ENCODE measurements at regions of chr3 and their contacts with region 1.

Region 1: GRCh38 chr3:150546226-150547044 is at the starts of genes EIF2A and SERP1:
- DNase-seq: peak; percentile 99
- H3K4me3 Mint-ChIP-seq: peak within 1 kb of the TSS; percentile 95
- H3K27ac Mint-ChIP-seq: peak within 1 kb of the TSS; percentile 98
- H3K4me1 Mint-ChIP-seq: peaks cover 70% of the 10 kb centered on the region
- H3K27me3 Mint-ChIP-seq: no peaks in the 10 kb centered on the region
- total RNA-seq, gene EIF2A: 122 TPM in 2 replicates
- total RNA-seq, gene SERP1: 96.0 and 102 TPM in 2 replicates

Region 2: DNA sequence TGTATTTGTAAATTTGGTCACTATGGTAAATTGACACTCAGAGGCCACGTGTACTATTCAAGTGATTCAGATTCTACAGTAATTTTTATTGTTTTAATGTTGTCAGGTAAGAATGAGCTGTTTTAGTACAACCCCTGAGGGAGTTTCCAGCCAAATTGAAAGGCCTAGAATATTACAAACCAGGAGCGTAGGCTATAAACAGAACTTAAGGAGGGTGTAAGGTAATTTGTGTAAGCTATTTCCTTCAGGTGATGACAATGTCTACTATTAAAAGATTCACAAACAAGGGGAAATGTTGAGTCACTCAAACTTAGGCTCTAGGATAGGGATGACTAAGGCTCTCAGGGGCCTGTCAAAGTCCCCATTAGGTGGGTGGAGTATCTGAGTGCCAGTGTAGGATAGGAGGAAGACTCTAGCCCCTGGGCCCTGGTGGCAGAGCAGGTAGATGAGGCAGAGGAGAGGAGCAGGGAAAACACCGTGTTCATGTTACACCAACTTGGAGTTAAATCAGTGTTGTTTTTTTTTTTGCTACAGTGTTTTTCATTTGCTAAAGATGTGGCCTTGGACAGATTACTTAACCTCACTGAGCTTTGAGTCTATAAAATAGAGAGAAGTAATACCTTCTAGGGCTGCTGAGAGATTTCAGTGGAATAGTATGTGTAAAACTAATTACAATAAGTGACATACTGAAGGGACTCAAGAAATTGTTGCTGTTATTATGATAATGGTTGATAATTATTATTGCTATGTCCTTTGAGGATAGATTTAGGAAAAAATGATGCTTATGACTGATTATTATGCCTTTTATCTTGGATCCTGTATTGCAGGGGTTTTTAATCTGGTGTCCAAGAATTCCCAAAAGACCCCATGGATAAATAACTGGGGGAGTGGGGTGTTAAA is 1179.2 kb before region 1 on chr3:
- intact Hi-C with region 1: no loop called
- DNase-seq: no peak
- H3K4me3 Mint-ChIP-seq: no peak overlapping the region
- H3K27ac Mint-ChIP-seq: peak overlapping the region; percentile 59
- H3K4me1 Mint-ChIP-seq: peaks cover 9% of the 10 kb centered on the region
- H3K27me3 Mint-ChIP-seq: peaks cover 8% of the 10 kb centered on the region

Region 3: DNA sequence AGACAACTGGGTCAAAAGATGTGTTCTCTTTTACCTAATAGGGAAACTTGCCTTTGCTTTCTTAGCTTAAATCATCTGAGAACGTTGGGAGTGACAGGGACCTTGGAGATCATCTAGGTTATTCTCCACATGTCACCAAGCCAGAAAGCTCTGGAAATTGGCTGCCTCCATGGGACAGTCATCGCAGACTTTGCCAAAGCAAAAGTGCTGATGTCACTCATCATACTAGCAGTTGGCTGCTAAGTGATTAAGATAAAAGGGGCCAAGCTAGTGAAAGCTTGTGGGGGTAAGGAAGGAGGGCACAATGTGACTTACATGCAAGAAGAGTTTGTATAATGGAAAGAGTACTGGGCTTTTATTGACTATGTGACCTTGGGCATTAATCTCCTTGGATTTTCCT is 377.7 kb before region 1 on chr3:
- intact Hi-C with region 1: no loop called
- DNase-seq: no peak
- H3K4me3 Mint-ChIP-seq: no peak overlapping the region
- H3K27ac Mint-ChIP-seq: no peak overlapping the region
- H3K4me1 Mint-ChIP-seq: no peaks in the 10 kb centered on the region
- H3K27me3 Mint-ChIP-seq: peaks cover 2% of the 10 kb centered on the region

Region 4: GRCh38 chr3:150408221-150409102 is 138.0 kb before region 1 on chr3 and contains the start of gene TSC22D2:
- intact Hi-C with region 1: loop called (anchors 1 kb)
- DNase-seq: peak; percentile 92
- H3K4me3 Mint-ChIP-seq: peak within 1 kb of the TSS; percentile 83
- H3K27ac Mint-ChIP-seq: peak within 1 kb of the TSS; percentile 95
- H3K4me1 Mint-ChIP-seq: peaks cover 40% of the 10 kb centered on the region
- H3K27me3 Mint-ChIP-seq: peaks cover 6% of the 10 kb centered on the region
- total RNA-seq, gene TSC22D2: 21.3 and 22.7 TPM in 2 replicates

Region 5: GRCh38 chr3:150603153-150603979 is 56.9 kb after region 1 on chr3 and contains the start of gene SELENOT:
- intact Hi-C with region 1: loop called (anchors 1 kb)
- DNase-seq: peak; percentile 96
- H3K4me3 Mint-ChIP-seq: peak within 1 kb of the TSS; percentile 99
- H3K27ac Mint-ChIP-seq: peak within 1 kb of the TSS; percentile 99
- H3K4me1 Mint-ChIP-seq: peaks cover 80% of the 10 kb centered on the region
- H3K27me3 Mint-ChIP-seq: peaks cover 2% of the 10 kb centered on the region
- total RNA-seq, gene SELENOT: 139 and 140 TPM in 2 replicates

Region 6: GRCh38 chr3:150763122-150763841 is 216.8 kb after region 1 on chr3 and contains the start of gene SIAH2:
- intact Hi-C with region 1: loop called (anchors 1 kb)
- DNase-seq: peak; percentile 90
- H3K4me3 Mint-ChIP-seq: peak within 1 kb of the TSS; percentile 99
- H3K27ac Mint-ChIP-seq: peak within 1 kb of the TSS; percentile 100
- H3K4me1 Mint-ChIP-seq: peaks cover 64% of the 10 kb centered on the region
- H3K27me3 Mint-ChIP-seq: no peaks in the 10 kb centered on the region
- total RNA-seq, gene SIAH2: 175 and 177 TPM in 2 replicates

Region 7: DNA sequence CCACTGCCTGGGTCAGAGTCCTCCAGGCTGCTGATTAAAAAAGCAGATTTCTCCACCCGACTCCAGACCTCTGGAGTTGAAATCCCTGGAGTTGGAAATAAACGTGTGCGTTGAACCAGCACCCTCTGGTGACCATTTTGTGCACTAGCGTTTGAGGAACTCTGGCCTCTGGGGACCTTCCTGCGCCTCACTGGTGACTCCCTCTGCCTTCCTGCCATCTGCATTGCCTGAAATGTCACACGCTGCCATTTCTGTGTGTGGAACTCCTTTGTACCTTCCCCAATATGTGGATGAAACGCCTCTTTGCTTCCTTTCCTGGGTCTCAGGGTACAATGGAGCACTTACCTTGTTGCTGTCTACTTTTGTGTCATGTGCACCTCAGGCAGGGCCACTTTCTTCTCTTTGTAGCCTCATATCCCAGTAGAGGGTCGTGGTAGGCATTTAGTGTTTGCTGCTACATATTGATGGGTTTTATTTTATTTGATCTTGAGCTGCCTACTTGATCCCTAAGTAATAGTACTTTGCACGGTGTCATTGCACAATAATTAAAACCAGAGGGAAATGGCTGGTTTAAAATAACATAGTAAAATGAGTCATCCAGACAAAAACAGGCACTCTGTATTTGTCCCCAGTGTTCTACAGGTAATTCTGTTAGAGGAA is 599.8 kb after region 1 on chr3:
- intact Hi-C with region 1: loop called (anchors 5 kb)
- DNase-seq: peak; percentile 38
- H3K4me3 Mint-ChIP-seq: no peak overlapping the region
- H3K27ac Mint-ChIP-seq: no peak overlapping the region
- H3K4me1 Mint-ChIP-seq: no peaks in the 10 kb centered on the region
- H3K27me3 Mint-ChIP-seq: peaks cover 14% of the 10 kb centered on the region

Measured in activated T-helper 1 cell treated with anti-CD3 and anti-CD28 coated beads, Interleukin-12 subunit alpha, Interleukin-12 subunit beta, Interleukin-2, Interleukin-4 antibody, amounts not matched to agents 30 ng/mL and 10 ng/mL and 1 ng/mL, durations not matched to agents 14 hours and 24 hours and 36 hours (primary cell).